MCF 10A (cell line): ENCODE measurements at regions of chr10 and their contacts with region 1.

Region 1: DNA sequence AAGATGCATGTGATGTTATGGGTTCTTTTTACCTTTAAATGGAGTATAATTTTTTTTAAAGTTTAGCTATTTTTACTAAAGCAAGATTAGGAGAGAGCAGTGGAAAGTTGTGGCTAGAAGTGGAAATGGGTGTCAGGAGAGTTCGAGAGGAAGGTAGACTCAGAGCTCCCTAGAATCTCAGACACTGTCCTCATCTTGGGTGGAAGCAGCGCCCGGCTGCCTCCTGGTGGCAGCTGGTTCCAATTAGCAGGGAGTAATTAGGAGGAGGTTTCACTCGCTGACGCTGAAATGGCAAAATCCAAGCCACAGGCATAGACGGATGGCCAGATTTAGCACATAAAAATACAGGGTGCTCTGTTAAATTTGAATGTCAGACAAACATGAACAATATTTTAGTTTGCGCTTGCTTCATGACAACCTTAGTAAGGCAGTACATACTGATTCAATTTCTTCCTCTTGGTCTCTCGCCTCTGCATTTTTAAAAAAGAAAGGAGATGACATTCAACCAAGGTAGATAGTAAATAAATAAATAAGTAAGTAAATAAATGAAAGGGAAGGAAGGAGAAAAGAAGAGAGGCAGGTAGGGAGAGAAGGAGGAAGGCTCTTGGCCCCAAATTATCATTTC is 58.5 kb downstream of the LGI1 start:
- DNase-seq: peak; percentile 73
- H3K4me3 Mint-ChIP-seq: peak overlapping the region; percentile 5
- H3K27ac Mint-ChIP-seq: no peak overlapping the region
- H3K4me1 Mint-ChIP-seq: peaks cover 19% of the 10 kb centered on the region
- H3K27me3 Mint-ChIP-seq: peaks cover 23% of the 10 kb centered on the region
- CTCF ChIP-seq: peak; percentile 69

Region 2: GRCh38 chr10:93554760-93555432 is 261.3 kb before region 1 on chr10:
- CTCF ChIA-PET with region 1: interaction called, 9 read pairs
- POLR2A ChIA-PET with region 1: interaction called, 5 read pairs
- intact Hi-C with region 1: loop called (anchors 1 kb)
- DNase-seq: peak; percentile 84
- H3K4me3 Mint-ChIP-seq: no peak overlapping the region
- H3K27ac Mint-ChIP-seq: no peak overlapping the region
- H3K4me1 Mint-ChIP-seq: peaks cover 5% of the 10 kb centered on the region
- H3K27me3 Mint-ChIP-seq: no peaks in the 10 kb centered on the region
- CTCF ChIP-seq: peak; percentile 76

Region 3: DNA sequence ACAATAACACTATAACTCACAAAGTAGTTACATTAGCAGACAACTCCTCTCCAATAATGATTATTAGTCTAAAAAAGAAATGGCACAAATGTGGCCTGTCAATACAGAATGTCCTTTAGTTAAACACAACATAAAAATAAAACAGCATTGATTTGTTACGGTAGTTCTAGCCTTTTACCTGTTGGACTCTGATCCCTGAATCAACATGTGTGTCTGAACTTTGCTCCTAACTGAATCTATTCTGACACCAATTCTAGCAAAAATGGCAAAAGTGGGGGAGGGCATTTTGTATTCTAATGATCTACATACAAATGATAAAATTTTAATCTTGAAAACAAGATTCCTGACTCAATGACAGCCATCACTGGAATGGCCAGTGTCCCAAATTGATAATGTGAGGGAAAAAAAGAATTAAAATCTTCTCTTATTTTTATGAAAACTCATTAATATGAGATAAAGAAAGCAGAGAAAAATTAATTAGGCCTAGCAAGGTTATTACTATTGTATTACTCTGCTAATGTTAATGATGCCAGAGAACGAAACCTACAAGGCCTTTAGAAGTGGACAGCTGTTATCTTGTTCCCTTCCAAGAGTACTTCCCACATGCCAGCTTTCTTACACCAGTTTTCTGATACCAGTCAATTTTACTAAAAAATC is 144.1 kb before region 1 on chr10:
- CTCF ChIA-PET with region 1: no interaction called
- POLR2A ChIA-PET with region 1: no interaction called
- intact Hi-C with region 1: no loop called
- DNase-seq: no peak
- H3K4me3 Mint-ChIP-seq: no peak overlapping the region
- H3K27ac Mint-ChIP-seq: no peak overlapping the region
- H3K4me1 Mint-ChIP-seq: no peaks in the 10 kb centered on the region
- H3K27me3 Mint-ChIP-seq: no peaks in the 10 kb centered on the region
- CTCF ChIP-seq: no peak

Region 4: GRCh38 chr10:93746844-93747284 is 69.4 kb before region 1 on chr10:
- CTCF ChIA-PET with region 1: interaction called, 9 read pairs
- POLR2A ChIA-PET with region 1: interaction called, 3 read pairs
- intact Hi-C with region 1: loop called (anchors 1 kb)
- DNase-seq: peak; percentile 96
- H3K4me3 Mint-ChIP-seq: peak overlapping the region; percentile 13
- H3K27ac Mint-ChIP-seq: peak overlapping the region; percentile 13
- H3K4me1 Mint-ChIP-seq: peaks cover 17% of the 10 kb centered on the region
- H3K27me3 Mint-ChIP-seq: no peaks in the 10 kb centered on the region
- CTCF ChIP-seq: peak; percentile 32

Region 5: GRCh38 chr10:93859049-93859655 is 42.9 kb after region 1 on chr10:
- CTCF ChIA-PET with region 1: interaction called, 9 read pairs
- POLR2A ChIA-PET with region 1: no interaction called
- intact Hi-C with region 1: loop called (anchors 1 kb)
- DNase-seq: peak; percentile 26
- H3K4me3 Mint-ChIP-seq: no peak overlapping the region
- H3K27ac Mint-ChIP-seq: no peak overlapping the region
- H3K4me1 Mint-ChIP-seq: no peaks in the 10 kb centered on the region
- H3K27me3 Mint-ChIP-seq: no peaks in the 10 kb centered on the region
- CTCF ChIP-seq: peak; percentile 56